ENCODE measurements at regions of chr4 and their contacts with region 1.

Region 1: DNA sequence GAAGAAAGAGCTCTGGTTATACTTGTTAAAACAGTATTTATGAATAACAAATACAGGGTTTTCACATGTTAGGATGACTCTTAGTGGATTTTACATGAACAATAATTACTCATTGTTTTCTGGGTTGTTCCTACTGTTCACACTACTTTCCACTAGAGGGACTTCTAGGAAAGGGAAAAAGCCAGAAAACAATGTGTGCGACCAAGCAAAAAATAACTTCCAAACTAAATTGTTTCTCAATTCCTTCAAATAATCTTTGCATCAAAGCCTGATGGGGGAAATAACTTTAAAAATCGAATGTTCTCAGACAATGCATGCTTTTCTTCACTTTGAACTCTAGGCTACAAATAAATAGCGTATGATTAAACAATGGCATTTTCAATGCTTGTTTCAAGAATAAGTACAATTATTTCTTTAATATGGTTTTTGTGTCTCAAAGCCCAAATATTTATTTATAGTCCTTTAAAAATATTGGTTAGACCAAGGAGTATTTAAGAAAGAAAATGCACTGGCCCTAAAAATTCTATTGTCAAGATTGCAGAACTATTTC is 72.1 kb upstream of the ETNPPL start:
- DNase-seq: no peak
- ATAC-seq: no peak
- H3K4me3 Mint-ChIP-seq: no peak overlapping the region
- H3K27ac Mint-ChIP-seq: no peak overlapping the region
- H3K4me1 Mint-ChIP-seq: no peaks in the 10 kb centered on the region
- H3K27me3 Mint-ChIP-seq: peaks cover 5% of the 10 kb centered on the region
- CTCF ChIP-seq: peak; percentile 59

Region 2: GRCh38 chr4:109406338-109406931 is 571.5 kb after region 1 on chr4:
- CTCF ChIA-PET with region 1: interaction called, 10 read pairs
- POLR2A ChIA-PET with region 1: no interaction called
- intact Hi-C with region 1: loop called (anchors 10 kb)
- DNase-seq: peak; percentile 46
- ATAC-seq: peak; percentile 58
- H3K4me3 Mint-ChIP-seq: no peak overlapping the region
- H3K27ac Mint-ChIP-seq: no peak overlapping the region
- H3K4me1 Mint-ChIP-seq: no peaks in the 10 kb centered on the region
- H3K27me3 Mint-ChIP-seq: peaks cover 2% of the 10 kb centered on the region
- CTCF ChIP-seq: peak; percentile 82